ENCODE measurements at regions of chrX and their contacts with region 1.

Region 1: GRCh38 chrX:120514236-120514635 is 45.1 kb upstream of the LAMP2 start:
- DNase-seq: no peak

Region 2: DNA sequence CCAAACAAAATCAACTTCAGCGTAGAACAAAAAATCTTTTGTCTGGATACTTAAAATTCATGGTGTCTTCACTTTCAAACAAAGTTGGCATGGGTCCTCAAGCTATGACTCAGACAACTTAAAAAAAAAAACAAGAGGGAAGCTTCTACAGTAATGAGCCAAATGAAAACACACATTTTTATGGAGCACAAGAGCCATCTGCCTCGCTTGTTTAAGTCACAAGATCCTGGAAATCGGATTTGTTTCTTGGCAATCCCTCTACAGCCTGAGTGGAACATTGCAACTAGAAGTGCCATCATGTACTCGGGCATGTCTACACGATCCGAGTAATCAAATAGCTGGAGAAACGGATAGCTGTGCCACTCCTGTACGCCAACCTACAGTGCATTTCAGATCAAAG is 67.7 kb before region 1 on chrX:
- intact Hi-C with region 1: no loop called
- DNase-seq: no peak

Region 3: GRCh38 chrX:120468825-120469525 is 45.3 kb before region 1 on chrX and contains the start of gene LAMP2:
- intact Hi-C with region 1: loop called in 1 of 2 experiments (anchors 2 kb)
- DNase-seq: peak; percentile 96
- total RNA-seq, gene LAMP2: 92.5 to 102 TPM

Region 4: DNA sequence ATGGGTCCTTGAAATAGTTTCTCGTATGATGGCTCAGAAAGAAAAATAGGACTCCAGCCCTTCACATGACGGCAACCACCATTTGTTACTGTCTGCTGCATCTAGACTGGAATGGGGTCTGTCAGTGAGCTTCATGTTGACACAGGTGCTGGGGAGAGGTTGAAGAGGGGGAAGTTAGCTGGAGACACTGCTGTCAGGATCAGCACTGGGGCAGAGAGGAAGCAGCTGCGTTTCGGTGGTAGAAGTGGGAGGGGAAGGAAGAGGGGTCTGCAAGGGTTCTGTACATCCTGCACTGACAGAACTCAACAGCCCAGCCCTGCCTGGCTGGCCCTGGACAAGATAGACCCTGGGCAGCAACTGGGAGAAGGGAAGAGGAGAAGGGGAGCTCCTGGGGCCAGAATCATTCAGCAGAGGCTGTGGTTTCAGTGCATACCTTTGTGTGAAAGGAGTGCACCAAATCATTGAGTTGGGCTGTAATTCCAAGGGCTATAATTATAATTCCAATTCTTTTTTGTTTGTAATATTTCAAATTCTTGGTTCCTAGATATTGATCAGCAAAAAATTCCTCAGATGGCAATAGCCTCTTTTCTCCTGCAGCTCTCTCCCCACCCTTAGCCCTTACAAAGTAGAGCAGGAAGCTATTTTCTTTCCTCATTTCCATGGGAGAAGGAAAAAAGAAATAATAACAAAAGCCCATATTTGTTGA is 235.1 kb after region 1 on chrX:
- intact Hi-C with region 1: no loop called
- DNase-seq: no peak

Region 5: DNA sequence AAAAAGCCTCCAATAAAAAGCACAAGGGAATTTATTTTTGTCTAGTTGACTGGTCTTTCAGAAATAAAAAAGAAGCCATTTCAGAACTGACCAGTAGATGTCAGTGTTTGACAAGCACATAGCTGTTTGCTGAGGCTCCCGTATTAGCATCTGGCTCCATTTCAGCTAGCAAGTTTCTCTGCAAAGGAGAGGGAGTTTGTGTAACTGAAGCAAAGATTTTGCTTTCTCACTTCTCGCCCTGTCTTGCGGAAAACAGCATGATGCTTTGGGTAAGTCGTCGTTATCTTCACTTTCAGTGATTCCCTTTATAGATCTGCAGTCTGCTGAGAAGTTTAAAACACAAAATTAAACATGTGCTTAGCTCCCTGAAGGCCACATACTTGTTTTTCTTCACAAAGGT is 275.9 kb after region 1 on chrX:
- intact Hi-C with region 1: no loop called
- DNase-seq: no peak

Region 6: DNA sequence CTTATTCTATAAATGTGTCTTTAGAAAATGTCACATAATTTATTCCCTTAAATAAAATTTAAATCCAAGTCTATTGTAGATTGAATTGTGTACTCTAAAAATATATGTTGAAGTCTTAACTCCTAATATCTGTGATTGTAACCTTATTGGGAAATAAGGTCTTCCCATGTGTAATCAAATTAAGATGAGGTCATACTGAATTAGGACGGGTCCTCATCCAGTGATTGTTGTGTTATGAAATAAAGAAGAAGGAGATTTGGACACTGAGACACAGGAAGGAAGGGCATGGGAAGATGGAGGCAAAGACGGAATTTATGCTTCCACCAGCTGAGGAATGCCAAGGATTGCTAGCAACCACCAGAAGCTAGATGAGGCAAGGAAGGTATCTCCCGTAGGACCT is 1332.1 kb after region 1 on chrX:
- intact Hi-C with region 1: no loop called
- DNase-seq: no peak

Measured in posterior vena cava (tissue), 2 donors.